Spleen (tissue), 13 donors: ENCODE measurements at regions of chr11 and their contacts with region 1.

Region 1: GRCh38 chr11:83156150-83156995 is 558 bp upstream of the PCF11 start:
- DNase-seq: peak; percentile 100
- H3K4me3 ChIP-seq: peak overlapping the region; percentile 52 to 90 (median 78)
- H3K27ac ChIP-seq: peak overlapping the region; percentile 89 to 100 (median 98)
- H3K4me1 ChIP-seq: peaks cover 19 to 41% (median 29%) of the 10 kb centered on the region in 6 donors
- H3K27me3 ChIP-seq: no peaks in the 10 kb centered on the region
- CTCF ChIP-seq: peak in 2 of 11 experiments; percentile 9 to 25
- POLR2A ChIP-seq: peak in 2 of 3 donors; percentile 80 to 93

Region 2: GRCh38 chr11:83071567-83072349 is 84.6 kb before region 1 on chr11 and contains the start of gene RAB30:
- intact Hi-C with region 1: loop called (anchors 5 kb)
- DNase-seq: peak; percentile 96
- H3K4me3 ChIP-seq: peak within 1 kb of the TSS; percentile 57 to 75 (median 70)
- H3K27ac ChIP-seq: peak within 1 kb of the TSS; percentile 85 to 93 (median 92)
- H3K4me1 ChIP-seq: peaks cover 25 to 92% (median 53%) of the 10 kb centered on the region in 6 donors
- H3K27me3 ChIP-seq: peaks cover 0 to 18% (median 0%) of the 10 kb centered on the region in 7 donors
- CTCF ChIP-seq: peak in 2 of 11 experiments; percentile 7 to 19
- POLR2A ChIP-seq: peak; percentile 76 to 95 (median 87)
- total RNA-seq, gene RAB30: 15.5 to 42.8 (median 36.2) TPM

Region 3: GRCh38 chr11:83193315-83194280 is 37.2 kb after region 1 on chr11 and contains the start of gene ANKRD42:
- intact Hi-C with region 1: loop called (anchors 5 kb)
- DNase-seq: peak; percentile 96
- H3K4me3 ChIP-seq: peak within 1 kb of the TSS; percentile 64 to 99 (median 89)
- H3K27ac ChIP-seq: peak within 1 kb of the TSS; percentile 89 to 95 (median 92)
- H3K4me1 ChIP-seq: peaks cover 11 to 63% (median 40%) of the 10 kb centered on the region in 6 donors
- H3K27me3 ChIP-seq: no peaks in the 10 kb centered on the region
- CTCF ChIP-seq: peak in 6 of 11 experiments; percentile 14 to 44 (median 33)
- POLR2A ChIP-seq: peak in 2 of 3 donors; percentile 25 to 45
- total RNA-seq, gene ANKRD42: 5.9 to 8.6 (median 7.3) TPM